ENCODE measurements at regions of chr10 and their contacts with region 1.

Region 1: GRCh38 chr10:97714048-97714371 is 480 bp downstream of the MARVELD1 start:
- DNase-seq: no peak
- H3K4me3 ChIP-seq: peak overlapping the region; percentile 71
- H3K27me3 ChIP-seq: no peaks in the 10 kb centered on the region
- CTCF ChIP-seq: peak; percentile 37

Region 2: GRCh38 chr10:97623277-97623676 is 90.7 kb before region 1 on chr10:
- CTCF ChIA-PET with region 1: no interaction called
- POLR2A ChIA-PET with region 1: interaction called, 15 read pairs
- DNase-seq: no peak
- H3K4me3 ChIP-seq: no peak overlapping the region
- H3K27me3 ChIP-seq: no peaks in the 10 kb centered on the region
- CTCF ChIP-seq: no peak

Region 3: DNA sequence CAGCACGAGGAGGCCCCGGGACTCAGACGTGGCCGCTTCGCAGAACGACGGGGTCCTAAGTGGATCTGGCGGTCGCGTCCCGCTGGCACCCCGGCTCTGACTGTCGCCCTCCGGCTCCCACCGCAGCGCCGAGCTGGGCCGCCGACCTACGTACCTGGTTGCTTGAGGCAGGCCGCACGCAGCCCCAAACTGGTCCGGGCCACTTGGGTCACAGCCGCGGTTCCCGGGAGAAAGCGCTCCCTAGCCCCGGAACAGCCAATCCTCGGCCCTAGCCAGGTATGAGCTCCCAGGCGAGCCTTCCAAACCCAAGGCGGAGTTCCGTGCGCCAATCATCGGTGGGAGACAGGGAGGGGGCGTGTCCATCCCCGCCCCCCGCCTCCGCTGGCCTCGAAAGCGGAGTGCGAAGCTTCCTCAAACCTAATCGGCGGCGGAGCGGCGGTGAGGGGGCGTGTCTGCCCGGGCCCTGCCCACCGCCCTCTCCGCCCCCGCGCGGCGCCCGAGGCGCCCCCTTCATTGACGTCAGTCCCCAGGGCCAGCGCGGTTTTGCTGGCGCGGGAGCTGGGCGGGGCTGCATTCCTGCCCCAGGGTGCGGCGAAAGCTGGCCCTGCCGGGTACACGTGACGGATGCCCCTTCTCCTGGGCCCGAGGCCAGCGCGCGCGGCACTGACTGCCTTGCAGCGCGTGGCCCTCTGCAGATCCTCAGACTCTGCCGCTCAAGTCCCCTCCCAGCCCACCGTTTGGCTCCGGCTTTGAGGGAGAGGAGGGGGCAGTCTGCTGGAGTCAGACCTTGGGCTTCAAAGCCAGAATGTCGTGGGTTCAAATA is 26.8 kb before region 1 on chr10 and contains the start of gene AVPI1:
- CTCF ChIA-PET with region 1: interaction called, 12 read pairs
- POLR2A ChIA-PET with region 1: interaction called, 10 read pairs
- DNase-seq: peak; percentile 92
- H3K4me3 ChIP-seq: peak within 1 kb of the TSS; percentile 76
- H3K27me3 ChIP-seq: no peaks in the 10 kb centered on the region
- CTCF ChIP-seq: no peak
- polyA plus RNA-seq, gene AVPI1: 32.4 and 32.7 TPM in 2 replicates

Region 4: DNA sequence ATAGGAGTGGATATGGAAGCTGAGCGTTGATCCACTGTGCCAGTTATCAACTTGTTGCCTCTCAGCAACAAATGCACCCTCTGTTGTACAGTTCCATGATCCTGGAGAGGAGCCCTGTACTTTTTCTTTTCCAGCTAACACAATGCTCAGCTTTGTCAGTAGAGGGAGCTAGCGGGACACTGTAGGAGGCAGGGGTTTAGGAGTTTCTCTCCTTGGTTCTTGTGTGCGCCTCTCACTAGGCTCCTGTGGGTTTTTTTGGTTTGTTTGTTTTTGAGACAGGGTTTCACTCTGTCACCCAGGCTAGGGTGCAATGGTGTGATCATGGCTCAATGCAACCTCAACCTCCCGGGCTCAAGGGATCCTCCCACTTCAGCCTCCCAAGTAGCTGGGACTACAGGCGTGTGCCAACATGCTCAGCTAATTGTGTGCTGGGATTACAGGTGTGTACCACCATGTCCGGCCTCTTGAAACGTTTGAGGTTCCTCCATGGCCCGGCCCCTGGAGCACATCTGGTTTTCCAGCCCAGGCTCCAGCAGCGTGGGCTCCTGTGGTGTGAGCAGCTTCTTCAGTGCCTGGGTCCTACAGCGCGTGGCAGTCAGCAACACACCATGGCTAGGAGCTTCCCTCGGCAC is 12.5 kb before region 1 on chr10:
- CTCF ChIA-PET with region 1: interaction called, 41 read pairs
- POLR2A ChIA-PET with region 1: interaction called, 6 read pairs
- DNase-seq: no peak
- H3K4me3 ChIP-seq: no peak overlapping the region
- H3K27me3 ChIP-seq: no peaks in the 10 kb centered on the region; the same call in 1 of the 2 replicates
- CTCF ChIP-seq: peak; percentile 92

Region 5: DNA sequence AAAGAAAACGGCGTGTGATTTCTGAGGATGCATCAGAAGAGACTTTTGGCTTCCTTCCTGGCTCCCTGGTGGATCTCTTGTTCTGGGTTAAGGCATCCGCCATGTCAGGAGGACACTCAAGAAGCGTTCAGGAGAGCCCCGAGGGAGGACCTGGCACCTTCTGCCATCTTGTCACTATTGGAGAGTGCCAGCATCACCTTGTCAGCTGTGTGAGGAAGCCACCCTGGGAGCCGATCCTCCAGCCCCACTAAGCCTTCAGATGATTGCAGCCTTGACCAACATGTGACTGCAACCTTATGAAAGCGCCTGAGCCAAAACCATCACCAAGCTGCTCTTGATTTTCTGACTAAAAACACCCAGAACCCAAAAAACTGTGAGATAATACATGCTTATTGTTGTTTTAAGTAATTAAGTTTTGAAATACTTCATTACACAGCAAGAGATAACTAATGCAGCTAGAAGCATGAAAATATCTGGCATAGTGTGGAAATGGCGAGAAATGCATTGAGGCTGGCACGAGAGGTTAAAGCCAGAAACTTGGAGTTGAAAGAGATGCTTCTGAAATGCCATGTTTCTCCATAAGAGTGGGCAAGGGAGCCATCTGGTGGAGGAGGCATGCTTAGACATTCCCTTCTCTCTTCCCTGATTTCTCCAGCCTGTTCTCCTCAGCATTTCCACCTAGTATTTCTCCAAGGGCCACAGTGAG is 17.5 kb after region 1 on chr10:
- CTCF ChIA-PET with region 1: interaction called, 517 read pairs
- POLR2A ChIA-PET with region 1: interaction called, 10 read pairs
- DNase-seq: no peak
- H3K4me3 ChIP-seq: no peak overlapping the region
- H3K27me3 ChIP-seq: no peaks in the 10 kb centered on the region
- CTCF ChIP-seq: peak; percentile 82

Region 6: DNA sequence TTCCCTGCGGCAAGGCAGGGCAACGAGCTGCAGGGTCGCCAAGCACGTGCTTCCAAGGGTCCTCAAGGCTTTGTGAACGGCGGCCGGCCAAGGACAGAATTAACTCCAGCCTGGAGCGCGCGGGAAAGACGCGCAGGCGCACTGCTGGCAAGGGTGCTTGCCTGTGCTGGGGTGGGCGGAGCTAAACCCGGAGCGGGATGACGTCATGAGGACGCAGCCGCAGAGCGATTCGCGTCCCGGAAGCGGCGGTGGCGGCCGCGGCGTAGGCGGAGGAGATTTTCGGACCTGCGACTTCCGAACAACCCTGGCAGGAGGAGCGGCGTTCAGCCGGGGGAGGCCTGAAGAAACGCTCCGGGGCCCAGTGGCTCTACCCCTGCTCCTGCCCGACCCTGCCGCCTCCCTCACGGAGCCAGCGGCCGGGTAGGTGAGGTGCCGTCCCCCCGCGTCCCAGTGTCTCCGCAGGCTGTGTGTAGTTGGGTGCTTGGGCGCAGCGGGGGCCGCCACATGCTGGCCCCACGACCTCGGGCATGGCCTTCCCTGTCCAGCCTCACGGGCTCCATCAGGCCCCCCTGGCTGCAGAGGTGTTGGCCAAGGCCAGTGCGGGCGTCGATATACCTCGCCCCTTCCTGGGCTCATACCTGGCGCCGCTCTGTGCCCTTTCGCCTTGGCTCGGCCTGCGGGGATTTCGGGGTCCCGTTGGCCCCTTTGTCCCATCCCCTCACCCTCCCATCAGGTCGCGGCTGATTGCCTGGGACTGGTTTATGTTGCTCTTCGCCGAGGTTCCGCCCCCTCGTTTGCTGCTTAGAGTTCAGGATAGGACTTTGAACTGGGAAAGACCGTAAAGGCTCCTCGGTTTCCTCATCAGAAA is 23.1 kb after region 1 on chr10 and contains the start of gene ZFYVE27:
- CTCF ChIA-PET with region 1: interaction called, 517 read pairs
- POLR2A ChIA-PET with region 1: interaction called, 3 read pairs
- DNase-seq: peak; percentile 72
- H3K4me3 ChIP-seq: peak within 1 kb of the TSS; percentile 74
- H3K27me3 ChIP-seq: no peaks in the 10 kb centered on the region
- CTCF ChIP-seq: no peak
- polyA plus RNA-seq, gene ZFYVE27: 16.1 and 22.9 TPM in 2 replicates

Region 7: DNA sequence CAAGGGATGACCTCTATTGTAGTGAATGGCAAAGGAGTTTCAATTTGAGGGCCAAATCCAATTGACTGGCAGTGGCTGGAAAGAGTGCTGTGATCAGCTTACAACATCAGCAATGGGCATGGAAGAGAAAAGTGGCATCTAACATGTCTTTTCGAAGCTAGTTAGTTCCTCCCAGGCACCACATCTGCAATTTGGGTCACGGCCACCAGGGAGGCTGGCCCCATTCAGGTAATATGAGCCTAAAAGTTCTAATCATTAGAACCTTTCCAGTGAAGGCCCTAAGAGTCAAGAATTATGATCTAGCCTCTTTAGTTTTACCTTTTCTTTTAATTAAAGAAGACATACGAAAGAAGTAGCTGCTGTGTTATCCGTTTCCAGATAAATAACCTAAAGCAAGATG is 299.1 kb after region 1 on chr10:
- CTCF ChIA-PET with region 1: no interaction called
- POLR2A ChIA-PET with region 1: no interaction called
- DNase-seq: no peak
- H3K4me3 ChIP-seq: no peak overlapping the region
- H3K27me3 ChIP-seq: no peaks in the 10 kb centered on the region; the same call in 1 of the 2 replicates
- CTCF ChIP-seq: no peak

Region 8: GRCh38 chr10:98858525-98858924 is 1144.5 kb after region 1 on chr10:
- CTCF ChIA-PET with region 1: no interaction called
- POLR2A ChIA-PET with region 1: no interaction called
- DNase-seq: no peak
- H3K4me3 ChIP-seq: no peak overlapping the region
- H3K27me3 ChIP-seq: no peaks in the 10 kb centered on the region
- CTCF ChIP-seq: 0 out of 2 replicates have a peak, but pooled peaks have one; percentile 11

Measured in BJ (cell line).